ENCODE measurements at regions of chr1 and their contacts with region 1.

Region 1: DNA sequence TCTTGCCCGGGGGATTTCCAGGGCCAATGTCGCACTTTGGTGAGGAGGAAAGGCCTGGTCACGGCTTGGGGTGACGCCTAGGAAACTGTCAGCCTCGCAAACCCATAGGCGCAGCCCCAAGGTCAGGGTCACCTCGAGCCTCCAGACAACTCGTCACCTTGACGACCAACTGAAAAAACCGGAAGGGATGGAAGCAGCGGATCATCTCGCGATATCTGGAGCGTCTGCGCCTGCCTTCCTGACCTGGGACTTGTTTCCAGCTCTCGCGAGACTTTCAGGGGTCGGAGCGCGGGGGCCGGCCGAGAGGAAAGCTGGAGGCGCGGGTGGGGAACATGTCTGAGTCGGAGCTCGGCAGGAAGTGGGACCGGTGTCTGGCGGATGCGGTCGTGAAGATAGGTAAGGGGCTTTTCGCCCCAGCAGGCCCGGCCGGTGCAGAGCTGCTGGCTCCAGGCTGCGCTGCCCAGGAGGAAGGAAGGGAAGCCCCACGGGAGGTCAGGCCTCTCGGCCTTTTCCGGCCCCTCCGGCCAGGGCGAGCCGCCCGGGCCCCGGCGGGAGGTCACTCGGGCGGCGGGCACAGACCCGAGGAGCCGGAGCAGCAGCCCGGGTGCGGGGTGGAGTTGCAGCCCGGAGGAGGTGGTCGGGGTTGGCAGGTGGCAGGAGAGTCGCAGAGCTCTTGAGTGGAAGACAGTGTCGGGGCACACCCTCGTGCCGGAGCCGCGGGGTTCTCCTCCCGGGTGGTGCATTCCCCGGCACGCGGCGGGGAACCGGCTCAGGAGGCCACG is 47.2 kb upstream of the NBL1 start:
- DNase-seq: peak; percentile 94 to 98
- ATAC-seq: peak; percentile 94 to 97 (median 96)
- H3K4me3 ChIP-seq: peak overlapping the region; percentile 53 to 98 (median 87)
- H3K27ac ChIP-seq: peak overlapping the region; percentile 71 to 99 (median 97)
- H3K4me1 ChIP-seq: peaks cover 0 to 51% (median 41%) of the 10 kb centered on the region in 9 donors
- H3K27me3 ChIP-seq: no peaks in the 10 kb centered on the region
- CTCF ChIP-seq: no peak

Region 2: DNA sequence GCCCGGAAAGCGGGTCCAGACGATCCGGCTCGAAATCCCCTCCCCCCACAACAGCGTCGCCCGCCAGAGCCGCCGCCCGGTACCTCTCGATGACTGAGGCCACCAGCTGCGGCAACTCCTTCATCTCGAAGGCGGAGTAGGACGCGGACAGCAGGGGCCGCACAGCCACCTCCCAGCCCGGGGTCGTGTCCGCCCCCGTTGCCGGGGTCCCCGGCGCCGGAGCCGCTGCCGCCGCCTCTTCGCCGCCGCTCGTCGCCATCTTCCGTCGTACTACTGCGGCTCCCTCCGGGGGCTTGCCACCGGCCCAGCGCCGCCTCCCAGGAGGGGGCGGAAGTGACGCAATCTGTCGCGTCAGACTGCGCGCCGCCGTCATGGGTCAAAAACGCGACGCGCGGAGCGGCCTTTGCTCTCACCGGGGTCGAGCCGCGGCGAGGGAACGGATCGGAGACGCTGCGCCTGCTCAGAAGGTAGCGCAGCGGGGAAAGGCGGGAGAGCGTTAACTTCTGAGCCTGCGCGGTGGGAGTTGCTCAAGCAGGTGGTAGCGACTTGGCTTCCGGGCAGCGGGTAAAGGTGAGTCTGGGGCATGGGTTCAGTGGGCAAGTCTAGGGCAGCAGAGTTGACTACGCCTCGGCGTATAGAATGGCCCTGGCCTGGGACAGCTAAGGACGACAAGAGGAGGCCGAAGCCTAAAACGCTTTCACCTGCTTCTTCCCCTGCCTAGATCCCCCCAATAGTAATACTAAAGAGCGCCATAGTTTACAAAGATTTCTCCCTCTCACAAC is 386.7 kb before region 1 on chr1 and contains the start of gene UBR4:
- intact Hi-C with region 1: loop called in 1 of 10 experiments (anchors 10 kb)
- DNase-seq: peak; percentile 94 to 95
- ATAC-seq: peak; percentile 98 to 99 (median 98)
- H3K4me3 ChIP-seq: peak within 1 kb of the TSS; percentile 70 to 94 (median 90)
- H3K27ac ChIP-seq: peak within 1 kb of the TSS; percentile 84 to 97 (median 95)
- H3K4me1 ChIP-seq: peaks cover 15 to 73% (median 64%) of the 10 kb centered on the region in 9 donors
- H3K27me3 ChIP-seq: no peaks in the 10 kb centered on the region
- CTCF ChIP-seq: peak in 1 of 9 donors; percentile 35
- total RNA-seq, gene UBR4: 60.0 to 115 (median 90.6) TPM

Region 3: DNA sequence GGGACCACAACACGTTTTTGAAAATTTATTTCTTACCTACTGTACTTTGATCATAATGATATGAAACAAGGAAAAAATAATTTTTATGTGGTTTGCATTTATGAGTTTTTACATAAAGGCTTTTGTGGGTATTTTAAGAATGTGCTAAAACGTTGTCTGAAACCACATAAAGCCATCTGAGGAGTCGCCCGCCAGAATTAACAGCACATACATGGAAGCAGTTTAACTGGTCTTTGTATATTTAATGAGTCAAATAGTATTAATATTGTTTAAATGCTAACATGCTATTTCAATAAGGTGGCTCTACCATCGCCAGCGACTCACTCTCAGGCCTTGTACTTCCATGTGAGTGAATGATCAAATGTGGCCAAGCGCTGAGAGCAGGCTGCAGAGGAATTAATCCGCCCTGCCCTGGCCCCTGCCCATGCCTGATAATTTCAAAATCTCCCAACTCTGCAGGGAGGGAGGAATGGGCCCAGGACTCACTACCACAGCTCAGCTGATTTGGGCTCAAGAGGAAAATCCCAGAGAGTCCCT is 235.2 kb before region 1 on chr1:
- intact Hi-C with region 1: no loop called
- DNase-seq: no peak
- ATAC-seq: no peak
- H3K4me3 ChIP-seq: no peak overlapping the region
- H3K27ac ChIP-seq: no peak overlapping the region
- H3K4me1 ChIP-seq: peaks cover 0 to 41% (median 18%) of the 10 kb centered on the region in 9 donors
- H3K27me3 ChIP-seq: no peaks in the 10 kb centered on the region
- CTCF ChIP-seq: no peak

Region 4: GRCh38 chr1:19400875-19401534 is 195.9 kb before region 1 on chr1:
- intact Hi-C with region 1: loop called in 1 of 10 experiments (anchors 5 kb)
- DNase-seq: no peak
- ATAC-seq: no peak
- H3K4me3 ChIP-seq: no peak overlapping the region
- H3K27ac ChIP-seq: peak overlapping the region in 5 of 10 donors; percentile 28 to 65 (median 48)
- H3K4me1 ChIP-seq: peaks cover 24 to 90% (median 59%) of the 10 kb centered on the region in 9 donors
- H3K27me3 ChIP-seq: no peaks in the 10 kb centered on the region
- CTCF ChIP-seq: no peak

Region 5: DNA sequence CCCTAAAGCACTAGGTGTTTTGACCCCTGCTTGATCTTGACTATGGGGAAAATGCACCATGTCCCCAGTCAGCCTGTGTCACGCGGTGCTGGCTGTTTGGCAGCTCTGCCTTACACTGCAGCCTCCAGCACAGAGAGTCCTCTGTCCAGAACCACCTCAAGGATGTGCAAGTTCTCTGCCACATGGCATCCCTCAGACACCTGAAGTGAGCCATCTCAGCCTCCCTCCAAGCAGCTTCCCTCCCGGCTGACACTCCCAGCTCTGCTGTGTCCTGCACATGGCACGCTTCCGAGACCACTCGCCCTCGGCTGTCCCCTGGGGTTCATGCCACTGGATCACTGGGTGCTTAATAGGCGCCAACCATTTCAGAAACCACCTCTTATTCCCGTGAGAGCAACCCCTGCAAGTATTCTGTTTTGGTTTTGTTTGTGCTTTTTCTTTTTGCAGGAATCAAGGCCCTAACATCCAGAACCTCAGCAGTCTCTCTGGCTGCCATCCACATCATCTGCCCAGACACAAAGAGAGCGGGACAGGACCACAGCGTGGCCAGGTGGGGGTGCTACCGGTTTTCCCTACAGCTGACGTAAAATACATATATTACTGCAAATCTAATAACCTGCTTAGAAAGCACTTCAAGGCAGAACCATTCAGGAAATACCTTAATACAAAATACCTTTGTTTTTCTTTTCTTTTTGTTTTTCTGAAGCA is 157.3 kb before region 1 on chr1:
- intact Hi-C with region 1: loop called in 1 of 10 experiments (anchors 5 kb)
- DNase-seq: peak in 1 of 2 donors; percentile 50
- ATAC-seq: peak in 7 of 8 donors; percentile 10 to 80 (median 40)
- H3K4me3 ChIP-seq: no peak overlapping the region
- H3K27ac ChIP-seq: peak overlapping the region; percentile 75 to 93 (median 84)
- H3K4me1 ChIP-seq: peaks cover 44 to 100% (median 98%) of the 10 kb centered on the region in 9 donors
- H3K27me3 ChIP-seq: no peaks in the 10 kb centered on the region
- CTCF ChIP-seq: peak in 8 of 9 donors; percentile 9 to 58 (median 42)

Region 6: GRCh38 chr1:19504796-19505692 is 91.9 kb before region 1 on chr1:
- intact Hi-C with region 1: loop called in 1 of 10 experiments (anchors 5 kb)
- DNase-seq: peak in 1 of 2 donors; percentile 44
- ATAC-seq: peak; percentile 72 to 91 (median 82)
- H3K4me3 ChIP-seq: peak overlapping the region in 3 of 10 donors; percentile 2 to 16 (median 2)
- H3K27ac ChIP-seq: peak overlapping the region; percentile 62 to 91 (median 84)
- H3K4me1 ChIP-seq: peaks cover 9 to 71% (median 45%) of the 10 kb centered on the region in 9 donors
- H3K27me3 ChIP-seq: no peaks in the 10 kb centered on the region
- CTCF ChIP-seq: no peak

Region 7: GRCh38 chr1:19643602-19644394 is 46.9 kb after region 1 on chr1 and contains the start of gene NBL1:
- intact Hi-C with region 1: loop called in 5 of 10 experiments (anchors 2 to 5 kb)
- DNase-seq: peak; percentile 83 to 84
- ATAC-seq: peak; percentile 60 to 90 (median 74)
- H3K4me3 ChIP-seq: peak within 1 kb of the TSS; percentile 44 to 88 (median 72)
- H3K27ac ChIP-seq: peak within 1 kb of the TSS; percentile 78 to 96 (median 92)
- H3K4me1 ChIP-seq: peaks cover 5 to 58% (median 41%) of the 10 kb centered on the region in 9 donors
- H3K27me3 ChIP-seq: peaks cover 0 to 42% (median 0%) of the 10 kb centered on the region in 7 donors
- CTCF ChIP-seq: no peak
- total RNA-seq, gene NBL1: 18.5 to 48.7 (median 35.1) TPM